Psoas muscle (tissue), 8 donors: ENCODE measurements at regions of chr12 and their contacts with region 1.

Region 1: DNA sequence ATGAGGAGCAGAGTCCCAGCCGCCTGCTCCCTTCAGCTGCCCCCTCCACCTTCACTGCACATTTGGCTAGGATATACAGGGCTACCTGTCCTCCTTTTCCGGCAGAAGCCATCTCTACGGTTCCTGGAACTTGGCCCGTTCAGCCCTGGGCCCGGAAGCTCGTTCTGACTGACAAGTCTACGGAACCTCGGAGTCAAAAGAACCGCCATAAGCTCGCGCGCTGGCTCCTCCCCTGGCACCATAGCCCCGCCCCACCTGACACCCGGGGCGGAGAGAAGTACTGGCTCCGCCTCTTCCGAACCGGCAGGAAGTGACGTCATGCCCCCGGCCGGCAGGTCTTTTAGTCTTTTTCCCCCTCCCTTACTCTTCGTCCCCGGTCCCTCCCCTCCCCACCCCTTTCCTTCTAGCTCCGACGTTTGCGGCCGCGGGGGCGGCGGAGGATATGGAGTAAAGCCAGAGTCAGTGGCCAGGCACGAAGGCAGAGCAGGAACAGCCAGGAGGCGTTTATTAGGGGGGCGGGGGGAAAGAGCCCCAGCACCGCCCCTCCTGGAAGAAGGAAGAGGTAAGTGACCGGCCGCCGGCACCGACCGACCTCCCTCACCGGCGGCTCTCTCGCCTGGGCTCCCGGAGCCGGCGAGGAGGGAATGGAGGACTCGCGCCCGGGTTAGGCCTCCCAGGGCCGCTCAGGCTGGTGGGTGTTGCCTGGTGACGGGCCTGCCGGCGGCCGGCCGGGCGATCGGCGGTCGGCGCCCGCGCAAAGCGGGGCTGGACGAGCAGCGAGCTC is at the starts of genes DEPDC4 and SCYL2:
- DNase-seq: peak; percentile 94 to 97
- ATAC-seq: peak; percentile 97 to 98 (median 97)
- H3K4me3 ChIP-seq: peak within 1 kb of the TSS; percentile 96
- H3K27ac ChIP-seq: peak within 1 kb of the TSS; percentile 97
- H3K4me1 ChIP-seq: peaks cover 18% of the 10 kb centered on the region
- H3K27me3 ChIP-seq: no peaks in the 10 kb centered on the region
- CTCF ChIP-seq: no peak
- total RNA-seq, gene DEPDC4: 0.32 to 1.4 (median 0.47) TPM in 3 of 4 donors, not detected in the other
- total RNA-seq, gene SCYL2: 23.3 to 29.0 (median 28.3) TPM

Region 2: GRCh38 chr12:100142851-100143559 is 124.0 kb before region 1 on chr12 and contains the start of gene BLTP3B:
- intact Hi-C with region 1: loop called in 1 of 2 experiments (anchors 5 kb)
- DNase-seq: peak; percentile 95
- ATAC-seq: peak; percentile 95 to 98 (median 96)
- H3K4me3 ChIP-seq: peak within 1 kb of the TSS; percentile 98
- H3K27ac ChIP-seq: peak within 1 kb of the TSS; percentile 98
- H3K4me1 ChIP-seq: peaks cover 20% of the 10 kb centered on the region
- H3K27me3 ChIP-seq: no peaks in the 10 kb centered on the region
- CTCF ChIP-seq: no peak
- total RNA-seq, gene BLTP3B: 21.0 to 34.6 (median 26.9) TPM

Region 3: DNA sequence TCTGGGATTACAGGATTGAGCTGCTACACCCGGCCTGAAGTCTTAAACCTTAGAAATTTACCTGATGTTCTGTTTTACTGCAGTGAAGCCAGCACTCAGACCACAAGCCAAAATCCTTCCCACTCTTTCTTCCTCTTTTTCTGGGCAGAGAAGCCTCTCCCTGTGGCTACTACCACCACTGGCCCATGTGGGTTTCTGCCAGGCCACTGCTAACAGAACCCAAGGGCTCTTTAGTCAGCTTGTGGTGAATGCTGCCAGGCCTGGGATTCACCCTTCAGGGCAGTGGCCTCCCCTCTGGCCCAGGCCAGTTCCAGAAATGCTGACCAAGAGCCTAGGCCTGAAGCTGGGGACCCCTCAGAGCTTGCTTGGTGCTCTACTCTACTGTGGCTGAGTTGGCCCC is 341.7 kb after region 1 on chr12:
- intact Hi-C with region 1: no loop called
- DNase-seq: no peak
- ATAC-seq: no peak
- H3K4me3 ChIP-seq: no peak overlapping the region
- H3K27ac ChIP-seq: no peak overlapping the region
- H3K4me1 ChIP-seq: no peaks in the 10 kb centered on the region
- H3K27me3 ChIP-seq: no peaks in the 10 kb centered on the region
- CTCF ChIP-seq: no peak